Tibial artery (tissue), 4 donors: ENCODE measurements at regions of chr3 and their contacts with region 1.

Region 1: GRCh38 chr3:154095832-154096421 is 25.3 kb upstream of the ARHGEF26 start:
- DNase-seq: no peak
- H3K4me3 ChIP-seq: no peak overlapping the region
- H3K27ac ChIP-seq: no peak overlapping the region
- H3K4me1 ChIP-seq: peaks cover 0 to 4% (median 2%) of the 10 kb centered on the region in 4 donors
- H3K27me3 ChIP-seq: no peaks in the 10 kb centered on the region
- CTCF ChIP-seq: peak; percentile 25 to 49

Region 2: DNA sequence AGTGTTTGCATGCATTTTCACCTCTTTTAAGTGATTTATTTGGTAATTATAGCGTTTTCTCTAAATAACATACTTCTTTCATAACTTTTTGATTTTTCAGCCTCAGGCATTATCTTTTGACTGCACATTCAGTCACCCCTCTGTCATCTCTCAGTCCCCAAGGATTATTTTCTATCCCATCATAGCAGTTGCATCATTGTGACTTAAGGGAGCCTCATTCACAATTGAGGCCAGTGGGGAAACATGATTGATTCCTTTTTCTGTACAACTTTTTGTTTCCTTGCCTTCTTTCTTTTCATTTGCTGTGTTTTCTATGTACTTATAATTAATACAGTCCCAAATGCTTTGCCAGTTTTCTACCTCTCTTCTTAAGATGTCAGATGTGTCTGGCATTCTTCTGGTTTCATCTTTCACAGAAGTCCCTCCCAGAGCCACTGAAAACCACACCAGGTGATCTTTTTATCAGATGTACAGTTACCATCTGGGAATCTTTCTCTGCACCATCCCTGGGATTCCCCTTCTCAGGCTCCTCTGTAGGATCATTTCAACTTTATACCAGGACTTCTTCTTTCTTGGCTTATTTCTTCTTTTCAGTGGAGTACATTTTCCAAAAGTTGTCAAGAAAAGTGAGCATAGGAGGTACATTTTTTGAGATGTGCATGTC is 782.5 kb before region 1 on chr3:
- intact Hi-C with region 1: no loop called
- DNase-seq: no peak
- H3K4me3 ChIP-seq: no peak overlapping the region
- H3K27ac ChIP-seq: no peak overlapping the region
- H3K4me1 ChIP-seq: peaks cover 0 to 10% (median 0%) of the 10 kb centered on the region in 4 donors
- H3K27me3 ChIP-seq: no peaks in the 10 kb centered on the region
- CTCF ChIP-seq: no peak

Region 3: GRCh38 chr3:154132777-154133375 is 36.9 kb after region 1 on chr3:
- intact Hi-C with region 1: no loop called
- DNase-seq: no peak
- H3K4me3 ChIP-seq: no peak overlapping the region
- H3K27ac ChIP-seq: no peak overlapping the region
- H3K4me1 ChIP-seq: peaks cover 0 to 28% (median 0%) of the 10 kb centered on the region in 4 donors
- H3K27me3 ChIP-seq: no peaks in the 10 kb centered on the region
- CTCF ChIP-seq: no peak

Region 4: GRCh38 chr3:154252759-154253638 is 157.1 kb after region 1 on chr3:
- intact Hi-C with region 1: loop called (anchors 5 kb)
- DNase-seq: peak; percentile 90 to 94
- H3K4me3 ChIP-seq: no peak overlapping the region
- H3K27ac ChIP-seq: no peak overlapping the region
- H3K4me1 ChIP-seq: no peaks in the 10 kb centered on the region
- H3K27me3 ChIP-seq: no peaks in the 10 kb centered on the region
- CTCF ChIP-seq: peak; percentile 89 to 90